ENCODE measurements at regions of chr11 and their contacts with region 1.

Region 1: DNA sequence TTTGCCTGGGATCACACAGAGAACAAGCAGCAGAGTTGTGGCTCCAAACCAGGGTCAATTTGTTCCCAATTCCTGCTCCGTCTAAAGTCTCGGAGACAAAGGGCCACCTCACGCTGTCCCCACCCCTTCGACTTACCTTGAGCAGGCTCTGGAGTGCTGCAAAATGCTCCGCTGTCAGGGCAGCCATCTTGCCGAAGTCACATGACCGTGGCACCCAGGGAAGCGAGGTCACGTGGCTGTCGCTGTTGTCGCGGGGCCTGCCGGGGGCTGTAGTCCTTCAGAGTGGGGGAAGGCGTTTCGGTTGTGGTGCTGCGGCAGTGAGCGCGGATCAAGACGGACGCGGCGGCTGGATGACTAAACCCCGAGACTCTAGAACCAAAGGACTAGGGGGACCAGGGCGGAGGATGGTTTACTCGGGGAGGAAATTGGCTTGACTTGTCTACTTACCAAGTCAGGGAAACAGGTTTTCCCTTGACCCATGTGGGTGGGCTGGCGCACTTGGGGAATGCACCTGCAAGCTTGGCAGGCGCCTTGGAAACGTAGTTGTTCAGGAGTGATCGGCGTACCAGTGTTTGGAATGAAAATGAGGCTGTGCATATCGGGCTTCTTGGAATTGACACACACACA is at the start of gene COMMD9:
- DNase-seq: peak; percentile 92
- ATAC-seq: peak; percentile 94
- H3K4me3 ChIP-seq: peak within 1 kb of the TSS; percentile 66 to 98 (median 89)
- H3K4me3 Mint-ChIP-seq: peak within 1 kb of the TSS; percentile 97
- H3K27ac ChIP-seq: peak within 1 kb of the TSS; percentile 35 to 40
- H3K27ac Mint-ChIP-seq: peak within 1 kb of the TSS; percentile 90
- H3K4me1 ChIP-seq: peaks cover 12 to 16% of the 10 kb centered on the region in 2 donors
- H3K4me1 Mint-ChIP-seq: peaks cover 30% of the 10 kb centered on the region
- H3K27me3 ChIP-seq: no peaks in the 10 kb centered on the region
- H3K27me3 Mint-ChIP-seq: no peaks in the 10 kb centered on the region
- CTCF ChIP-seq: no peak
- total RNA-seq, gene COMMD9: 47.4 and 48.9 TPM in 2 replicates

Region 2: GRCh38 chr11:35662649-35663407 is 626.5 kb before region 1 on chr11 and contains the start of gene TRIM44:
- CTCF ChIA-PET with region 1: no interaction called
- POLR2A ChIA-PET with region 1: no interaction called
- intact Hi-C with region 1: loop called (anchors 1 kb)
- DNase-seq: peak; percentile 92
- ATAC-seq: peak; percentile 83
- H3K4me3 ChIP-seq: peak within 1 kb of the TSS; percentile 76 to 98 (median 89)
- H3K4me3 Mint-ChIP-seq: peak within 1 kb of the TSS; percentile 88
- H3K27ac ChIP-seq: peak within 1 kb of the TSS; percentile 86 to 96
- H3K27ac Mint-ChIP-seq: peak within 1 kb of the TSS; percentile 97
- H3K4me1 ChIP-seq: peaks cover 26 to 29% of the 10 kb centered on the region in 2 donors
- H3K4me1 Mint-ChIP-seq: peaks cover 40% of the 10 kb centered on the region
- H3K27me3 ChIP-seq: peaks cover 0 to 5% (median 0%) of the 10 kb centered on the region in 4 experiments
- H3K27me3 Mint-ChIP-seq: peaks cover 13% of the 10 kb centered on the region
- CTCF ChIP-seq: no peak
- total RNA-seq, gene TRIM44: 71.1 TPM in 2 replicates

Region 3: GRCh38 chr11:36478700-36479329 is 189.5 kb after region 1 on chr11:
- CTCF ChIA-PET with region 1: interaction called, 167 read pairs
- POLR2A ChIA-PET with region 1: no interaction called
- intact Hi-C with region 1: loop called (anchors 1 kb)
- DNase-seq: peak; percentile 65
- ATAC-seq: no peak
- H3K4me3 ChIP-seq: no peak overlapping the region
- H3K4me3 Mint-ChIP-seq: no peak overlapping the region
- H3K27ac ChIP-seq: no peak overlapping the region
- H3K27ac Mint-ChIP-seq: no peak overlapping the region
- H3K4me1 ChIP-seq: no peaks in the 10 kb centered on the region
- H3K4me1 Mint-ChIP-seq: no peaks in the 10 kb centered on the region
- H3K27me3 ChIP-seq: no peaks in the 10 kb centered on the region
- H3K27me3 Mint-ChIP-seq: no peaks in the 10 kb centered on the region
- CTCF ChIP-seq: peak; percentile 63

Region 4: GRCh38 chr11:36509694-36510566 is 220.6 kb after region 1 on chr11 and contains the start of gene TRAF6:
- CTCF ChIA-PET with region 1: interaction called, 9 read pairs
- POLR2A ChIA-PET with region 1: interaction called, 9 read pairs
- intact Hi-C with region 1: loop called (anchors 1 kb)
- DNase-seq: peak; percentile 92
- ATAC-seq: peak; percentile 94
- H3K4me3 ChIP-seq: peak within 1 kb of the TSS; percentile 73 to 95 (median 92)
- H3K4me3 Mint-ChIP-seq: peak within 1 kb of the TSS; percentile 96
- H3K27ac ChIP-seq: peak within 1 kb of the TSS; percentile 72 to 86
- H3K27ac Mint-ChIP-seq: peak within 1 kb of the TSS; percentile 97
- H3K4me1 ChIP-seq: peaks cover 16 to 17% of the 10 kb centered on the region in 2 donors
- H3K4me1 Mint-ChIP-seq: peaks cover 27% of the 10 kb centered on the region
- H3K27me3 ChIP-seq: peaks cover 0 to 2% (median 0%) of the 10 kb centered on the region in 4 experiments
- H3K27me3 Mint-ChIP-seq: peaks cover 16% of the 10 kb centered on the region
- CTCF ChIP-seq: peak; percentile 91
- total RNA-seq, gene TRAF6: 20.2 and 22.4 TPM in 2 replicates

Region 5: DNA sequence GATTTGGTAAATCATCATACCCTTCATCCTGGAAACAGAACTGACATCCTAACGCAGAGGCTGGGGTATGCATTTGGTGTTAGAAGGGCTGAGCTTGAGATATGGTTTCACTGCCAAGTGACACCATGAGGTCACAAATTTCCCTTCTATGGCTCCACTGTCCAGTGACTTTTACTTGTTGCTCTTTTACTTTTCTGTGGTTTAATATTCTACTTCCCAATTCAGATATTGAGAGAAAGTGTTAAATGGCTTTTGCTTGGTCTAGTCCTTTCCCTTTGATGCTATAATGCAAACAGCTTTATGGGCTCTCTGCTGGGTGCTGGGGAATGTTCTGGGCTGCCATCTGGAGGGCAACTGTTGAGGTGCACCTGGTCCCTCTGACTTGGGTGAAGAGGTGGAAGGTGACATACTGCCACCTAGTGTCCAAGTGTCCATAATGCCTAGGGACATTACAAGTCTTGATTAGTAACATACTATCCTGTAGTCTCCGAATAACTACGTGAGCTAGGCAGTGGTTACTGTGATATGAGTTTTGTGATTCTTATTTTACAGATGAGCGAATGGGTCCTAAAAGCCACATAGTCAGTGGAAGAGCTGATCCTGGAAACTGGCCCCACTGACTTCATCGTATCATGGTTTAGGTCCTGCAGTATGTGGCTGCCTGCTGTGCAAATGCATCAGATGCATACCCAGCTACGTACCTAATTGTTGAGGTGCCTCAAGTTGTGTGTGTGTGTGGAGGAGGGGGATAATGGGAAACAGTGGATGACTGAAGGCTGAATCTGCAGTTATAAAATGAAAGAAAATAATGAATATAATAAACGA is 457.8 kb after region 1 on chr11:
- CTCF ChIA-PET with region 1: interaction called, 11 read pairs
- POLR2A ChIA-PET with region 1: no interaction called
- intact Hi-C with region 1: no loop called
- DNase-seq: peak; percentile 87
- ATAC-seq: peak; percentile 99
- H3K4me3 ChIP-seq: no peak overlapping the region
- H3K4me3 Mint-ChIP-seq: no peak overlapping the region
- H3K27ac ChIP-seq: no peak overlapping the region
- H3K27ac Mint-ChIP-seq: no peak overlapping the region
- H3K4me1 ChIP-seq: no peaks in the 10 kb centered on the region
- H3K4me1 Mint-ChIP-seq: peaks cover 11% of the 10 kb centered on the region
- H3K27me3 ChIP-seq: peaks cover 0 to 10% (median 0%) of the 10 kb centered on the region in 4 experiments
- H3K27me3 Mint-ChIP-seq: peaks cover 17% of the 10 kb centered on the region
- CTCF ChIP-seq: peak; percentile 97

Region 6: GRCh38 chr11:37390576-37391083 is 1101.3 kb after region 1 on chr11:
- CTCF ChIA-PET with region 1: no interaction called
- POLR2A ChIA-PET with region 1: no interaction called
- intact Hi-C with region 1: no loop called
- DNase-seq: no peak
- ATAC-seq: no peak
- H3K4me3 ChIP-seq: no peak overlapping the region
- H3K4me3 Mint-ChIP-seq: no peak overlapping the region
- H3K27ac ChIP-seq: no peak overlapping the region
- H3K27ac Mint-ChIP-seq: no peak overlapping the region
- H3K4me1 ChIP-seq: no peaks in the 10 kb centered on the region
- H3K4me1 Mint-ChIP-seq: no peaks in the 10 kb centered on the region
- H3K27me3 ChIP-seq: no peaks in the 10 kb centered on the region
- H3K27me3 Mint-ChIP-seq: no peaks in the 10 kb centered on the region
- CTCF ChIP-seq: no peak

Measured in B cell (primary cell).